Activated CD4-positive, alpha-beta T cell treated with anti-CD3 and anti-CD28 coated beads, Interleukin-2, amount 10 ng/mL, durations not matched to agents 24 days and 14 days (primary cell): ENCODE measurements at regions of chr15 and their contacts with region 1.

Region 1: GRCh38 chr15:52679232-52680040 is at the start of gene ATOSA:
- DNase-seq: peak; percentile 98
- H3K4me3 Mint-ChIP-seq: peak within 1 kb of the TSS; percentile 98
- H3K27ac Mint-ChIP-seq: peak within 1 kb of the TSS; percentile 99
- H3K4me1 Mint-ChIP-seq: peaks cover 31% of the 10 kb centered on the region
- H3K27me3 Mint-ChIP-seq: peaks cover 6% of the 10 kb centered on the region
- total RNA-seq, gene ATOSA: 9.3 and 13.4 TPM in 2 replicates

Region 2: GRCh38 chr15:52256366-52256765 is 423.1 kb before region 1 on chr15:
- intact Hi-C with region 1: loop called (anchors 2 kb)
- DNase-seq: peak; percentile 93
- H3K4me3 Mint-ChIP-seq: peak overlapping the region; percentile 59
- H3K27ac Mint-ChIP-seq: peak overlapping the region; percentile 70
- H3K4me1 Mint-ChIP-seq: peaks cover 36% of the 10 kb centered on the region
- H3K27me3 Mint-ChIP-seq: no peaks in the 10 kb centered on the region

Region 3: GRCh38 chr15:52528991-52529926 is 150.2 kb before region 1 on chr15:
- intact Hi-C with region 1: loop called (anchors 2 kb)
- DNase-seq: peak; percentile 94
- H3K4me3 Mint-ChIP-seq: peak overlapping the region; percentile 76
- H3K27ac Mint-ChIP-seq: peak overlapping the region; percentile 81
- H3K4me1 Mint-ChIP-seq: peaks cover 30% of the 10 kb centered on the region
- H3K27me3 Mint-ChIP-seq: peaks cover 14% of the 10 kb centered on the region

Region 4: DNA sequence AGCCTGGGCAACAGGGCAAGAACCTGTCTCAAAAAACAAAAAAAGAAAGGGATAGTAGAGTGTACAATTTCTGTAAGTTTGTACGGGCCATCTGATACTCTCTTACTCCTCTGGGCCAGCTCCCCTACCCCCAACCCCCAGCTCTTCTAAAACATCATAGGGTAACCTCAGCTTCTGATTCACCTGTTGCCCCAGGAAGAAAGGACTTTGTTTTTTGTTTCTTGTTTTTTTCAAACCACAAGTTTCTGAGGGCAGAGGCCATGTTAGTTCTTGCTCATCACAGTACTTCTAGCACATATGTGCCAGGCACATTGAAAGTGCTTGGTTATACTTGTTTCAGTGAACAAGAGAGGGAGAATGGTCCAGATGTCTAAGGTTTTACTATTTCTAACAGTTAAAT is 20.5 kb before region 1 on chr15:
- intact Hi-C with region 1: loop called (anchors 2 kb)
- DNase-seq: peak; percentile 70
- H3K4me3 Mint-ChIP-seq: no peak overlapping the region
- H3K27ac Mint-ChIP-seq: peak overlapping the region; percentile 74
- H3K4me1 Mint-ChIP-seq: peaks cover 21% of the 10 kb centered on the region
- H3K27me3 Mint-ChIP-seq: no peaks in the 10 kb centered on the region

Region 5: GRCh38 chr15:52808441-52808840 is 129.0 kb after region 1 on chr15:
- intact Hi-C with region 1: no loop called
- DNase-seq: no peak
- H3K4me3 Mint-ChIP-seq: no peak overlapping the region
- H3K27ac Mint-ChIP-seq: no peak overlapping the region
- H3K4me1 Mint-ChIP-seq: peaks cover 7% of the 10 kb centered on the region
- H3K27me3 Mint-ChIP-seq: peaks cover 56% of the 10 kb centered on the region